Posterior cingulate gyrus (tissue), 11 donors: ENCODE measurements at regions of chr7 and their contacts with region 1.

Region 1: DNA sequence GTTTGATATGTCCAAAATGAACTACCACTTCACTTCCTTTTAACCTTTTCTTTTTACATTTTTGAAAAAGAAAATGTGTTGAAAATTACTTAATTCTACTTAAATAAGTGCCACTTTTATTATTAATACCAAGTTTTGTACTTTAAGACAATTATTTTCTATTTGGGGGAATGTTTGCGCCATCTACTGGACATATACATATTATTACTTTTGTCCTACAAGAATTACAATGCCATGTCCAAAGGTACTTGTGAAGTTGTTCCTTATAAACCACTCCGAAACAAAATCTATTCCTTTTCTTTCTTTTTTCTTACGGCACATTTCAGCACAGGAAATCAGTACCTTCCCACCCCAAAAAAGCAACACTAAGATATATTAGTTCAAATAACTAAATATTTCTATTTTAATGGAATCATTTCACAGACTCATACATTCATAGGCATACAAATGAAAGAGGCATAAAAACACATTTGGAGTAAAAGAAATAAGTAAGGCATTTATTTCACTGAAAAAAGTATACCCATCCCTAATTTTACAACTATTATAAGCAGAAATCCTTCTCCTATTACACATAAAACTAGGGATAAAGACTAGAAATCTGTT is 169.9 kb downstream of the RNF133 start:
- DNase-seq: no peak

Region 2: DNA sequence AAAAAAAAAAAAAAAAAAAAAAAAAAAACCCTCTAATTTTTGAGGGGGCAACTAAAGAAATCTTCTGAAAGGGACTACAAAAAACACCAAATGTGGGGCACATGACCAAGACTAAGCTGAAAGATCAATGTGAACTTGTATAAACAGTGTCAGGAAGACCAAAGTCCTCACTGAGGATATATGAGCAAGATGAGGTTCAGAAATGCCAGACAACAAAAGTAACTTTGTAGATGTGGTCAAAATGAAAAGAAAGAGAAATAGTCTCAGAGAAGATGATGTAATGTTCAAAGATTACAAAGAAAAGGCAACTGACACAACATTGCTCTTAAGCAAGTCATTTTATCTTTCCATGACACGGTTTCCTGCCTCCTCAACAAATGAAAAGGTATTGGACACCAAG is 704.7 kb before region 1 on chr7:
- intact Hi-C with region 1: no loop called
- DNase-seq: no peak

Region 3: GRCh38 chr7:122092964-122093797 is 435.8 kb before region 1 on chr7:
- intact Hi-C with region 1: loop called (anchors 10 kb)
- DNase-seq: peak in 8 of 10 donors; percentile 12 to 88 (median 64)

Region 4: DNA sequence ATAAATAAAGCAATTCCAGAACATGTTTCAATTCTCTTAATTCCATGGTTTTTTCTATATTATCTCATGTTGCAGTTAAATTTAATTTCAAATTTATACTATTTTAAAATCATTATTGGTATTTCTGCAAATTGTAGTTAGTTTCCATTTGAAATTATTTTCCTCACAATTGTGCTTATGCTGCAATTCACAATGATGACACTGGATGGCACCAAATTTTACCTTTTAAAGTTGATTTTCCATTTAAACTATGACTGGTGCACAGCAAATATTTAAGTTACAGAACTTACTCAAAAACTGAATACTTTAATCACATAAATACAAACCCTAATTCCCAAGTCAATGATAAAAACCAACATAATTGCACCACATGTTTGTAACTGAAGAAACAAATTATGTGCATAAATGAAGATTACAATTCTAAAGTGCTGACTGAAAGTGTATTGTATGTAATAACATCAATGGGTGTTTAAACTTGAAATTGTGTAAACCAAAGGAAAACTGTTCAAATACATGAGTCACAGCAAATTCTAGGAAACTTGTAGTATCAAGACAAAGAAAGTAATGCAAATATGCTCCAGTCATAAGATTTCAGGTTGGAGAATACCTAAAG is 309.6 kb before region 1 on chr7:
- intact Hi-C with region 1: loop called (anchors 1 kb)
- DNase-seq: no peak